GM12878 (cell line): ENCODE measurements at regions of chr2 and their contacts with region 1.

Region 1: GRCh38 chr2:189096769-189097447 is 82.7 kb downstream of the COL5A2 start:
- DNase-seq: no peak
- ATAC-seq: no peak
- H3K4me3 ChIP-seq: no peak overlapping the region
- H3K27ac ChIP-seq: no peak overlapping the region
- H3K4me1 ChIP-seq: no peaks in the 10 kb centered on the region
- H3K27me3 ChIP-seq: no peaks in the 10 kb centered on the region
- CTCF ChIP-seq: no peak
- EP300 ChIP-seq: no peak
- POLR2A ChIP-seq: no peak
- RAD21 ChIP-seq: no peak

Region 2: GRCh38 chr2:189287982-189288521 is 191.1 kb after region 1 on chr2:
- CTCF ChIA-PET with region 1: interaction called, 40 read pairs
- POLR2A ChIA-PET with region 1: no interaction called
- RAD21 ChIA-PET with region 1: interaction called, 36 read pairs
- SMC1A ChIA-PET with region 1: interaction called, 26 read pairs
- in situ Hi-C with region 1: loop called (anchors 10 kb)
- intact Hi-C with region 1: loop called (anchors 1 kb)
- DNase-seq: no peak
- ATAC-seq: peak; percentile 89
- H3K4me3 ChIP-seq: no peak overlapping the region
- H3K27ac ChIP-seq: no peak overlapping the region
- H3K4me1 ChIP-seq: no peaks in the 10 kb centered on the region
- H3K27me3 ChIP-seq: no peaks in the 10 kb centered on the region
- CTCF ChIP-seq: peak; percentile 30 to 54 (median 33); a peak in 4 of 6 replicates
- EP300 ChIP-seq: no peak
- POLR2A ChIP-seq: no peak
- RAD21 ChIP-seq: peak; percentile 64

Region 3: DNA sequence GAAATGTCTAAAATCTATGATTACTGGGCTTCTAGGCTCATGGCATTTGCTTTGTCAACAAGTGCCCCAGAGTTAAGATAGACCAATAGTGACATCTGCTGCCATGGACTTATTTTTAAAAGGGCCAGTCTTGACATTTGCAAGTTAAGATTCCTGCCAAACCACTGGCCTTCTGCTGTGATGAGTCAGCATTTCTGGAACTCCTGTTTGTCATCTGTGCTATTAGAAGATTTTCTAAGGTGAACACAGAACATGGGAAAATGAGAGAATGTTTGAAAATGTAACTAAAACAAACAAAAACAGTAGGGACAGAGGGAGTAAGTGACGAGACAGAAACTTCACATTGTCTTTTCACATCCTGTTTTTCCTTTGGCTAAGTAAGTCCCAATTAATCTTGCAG is 250.6 kb after region 1 on chr2:
- CTCF ChIA-PET with region 1: interaction called, 9 read pairs
- POLR2A ChIA-PET with region 1: no interaction called
- RAD21 ChIA-PET with region 1: interaction called, 3 read pairs
- SMC1A ChIA-PET with region 1: no interaction called
- in situ Hi-C with region 1: no loop called
- intact Hi-C with region 1: loop called (anchors 5 kb)
- DNase-seq: peak; percentile 11
- ATAC-seq: peak; percentile 95
- H3K4me3 ChIP-seq: no peak overlapping the region
- H3K27ac ChIP-seq: no peak overlapping the region
- H3K4me1 ChIP-seq: no peaks in the 10 kb centered on the region
- H3K27me3 ChIP-seq: no peaks in the 10 kb centered on the region
- CTCF ChIP-seq: peak in 1 of 3 experiments; percentile 37; a peak in 2 of 6 replicates
- EP300 ChIP-seq: no peak
- POLR2A ChIP-seq: no peak
- RAD21 ChIP-seq: peak; percentile 42; the same call in 1 of the 2 replicates